Dendritic cell treated with granulocyte-macrophage colony-stimulating factor and Interleukin-4, amounts not matched to agents 40 ng/mL and 50 ng/mL, for 4 days (primary cell): ENCODE measurements at regions of chr9 and their contacts with region 1.

Region 1: DNA sequence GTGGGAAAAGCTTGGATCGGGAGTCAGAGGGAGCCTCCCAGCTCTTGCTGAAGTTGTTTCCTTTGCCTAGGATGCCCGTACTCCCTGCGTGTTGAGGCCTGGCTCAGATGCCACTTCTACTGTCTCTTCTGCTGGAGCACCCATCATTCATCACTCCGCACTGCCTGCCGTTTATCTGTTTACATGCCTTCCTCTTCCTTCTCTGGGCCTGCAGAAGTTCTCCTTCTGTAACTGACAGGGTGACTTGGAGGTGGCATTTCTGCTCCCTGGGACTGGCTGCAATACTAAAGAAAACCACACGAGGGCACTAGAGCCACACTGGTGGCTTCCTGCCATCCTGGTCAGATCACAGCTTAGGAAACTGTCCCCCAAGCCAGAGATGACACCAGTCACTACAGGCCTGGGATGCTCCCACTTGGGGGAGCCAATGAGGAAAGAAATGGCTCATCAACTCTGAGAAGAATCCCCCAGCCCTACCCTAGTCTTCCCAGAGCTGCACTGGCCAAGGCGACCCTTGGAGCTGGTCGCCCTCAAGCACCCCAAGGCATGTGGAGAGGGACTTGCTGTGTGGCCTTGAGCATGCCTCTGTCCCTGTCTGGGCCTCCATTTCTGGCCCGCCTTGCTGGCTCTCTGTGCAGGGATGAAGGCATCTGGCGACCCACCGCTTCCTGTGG is 9.7 kb upstream of the SLC25A51 start:
- H3K4me3 Mint-ChIP-seq: no peak overlapping the region
- H3K27ac Mint-ChIP-seq: no peak overlapping the region
- H3K4me1 Mint-ChIP-seq: peaks cover 46% of the 10 kb centered on the region
- H3K27me3 Mint-ChIP-seq: no peaks in the 10 kb centered on the region

Region 2: GRCh38 chr9:37746848-37747753 is 166.5 kb before region 1 on chr9:
- intact Hi-C with region 1: loop called (anchors 5 kb)
- H3K4me3 Mint-ChIP-seq: no peak overlapping the region
- H3K27ac Mint-ChIP-seq: no peak overlapping the region
- H3K4me1 Mint-ChIP-seq: no peaks in the 10 kb centered on the region
- H3K27me3 Mint-ChIP-seq: no peaks in the 10 kb centered on the region

Region 3: DNA sequence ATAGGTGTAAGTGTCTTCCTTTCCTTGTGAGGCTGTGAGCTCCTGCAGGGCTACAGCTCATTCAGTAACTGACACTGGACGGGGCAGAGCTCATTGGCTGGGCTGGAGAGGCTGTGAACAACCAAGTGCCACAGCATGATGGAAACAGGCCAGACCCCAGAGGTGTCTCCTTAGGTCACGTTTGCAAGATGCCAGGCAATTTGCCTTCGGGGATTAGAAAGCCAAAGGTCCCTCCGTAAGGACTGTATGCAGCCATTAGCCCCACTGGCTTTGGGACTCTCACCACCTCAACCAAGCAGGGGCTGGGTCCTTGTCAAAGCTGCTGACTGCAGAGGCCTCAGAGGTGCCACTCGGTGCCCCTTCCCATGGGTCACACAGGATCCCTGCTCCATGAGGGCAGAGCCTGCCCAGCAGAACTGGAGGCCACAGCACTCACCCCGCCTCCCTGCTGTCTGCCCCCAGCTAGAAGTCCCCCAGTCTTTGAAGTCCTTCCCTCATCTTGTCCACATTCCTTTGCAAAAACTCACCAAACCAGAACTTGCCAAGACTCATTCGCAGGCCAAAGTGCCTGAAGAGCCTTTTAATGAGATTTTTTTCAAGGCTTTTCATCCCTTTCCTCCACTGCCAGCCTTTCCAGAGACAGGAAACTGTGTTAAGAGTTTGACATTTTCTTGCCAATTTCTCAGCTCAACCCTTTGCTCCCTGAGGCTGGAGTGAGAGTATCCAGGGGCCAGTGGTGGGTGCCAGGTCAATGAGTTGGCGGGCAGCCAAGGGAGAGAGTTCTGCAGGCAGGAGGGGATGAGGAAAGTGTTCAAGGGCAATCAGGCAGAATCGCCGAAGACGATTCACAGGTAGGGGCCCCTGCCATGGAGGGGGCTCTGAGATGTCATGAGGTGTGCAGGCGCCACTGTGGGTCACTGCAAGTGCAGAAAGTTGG is 30.0 kb after region 1 on chr9:
- intact Hi-C with region 1: no loop called
- H3K4me3 Mint-ChIP-seq: no peak overlapping the region
- H3K27ac Mint-ChIP-seq: no peak overlapping the region
- H3K4me1 Mint-ChIP-seq: peaks cover 13% of the 10 kb centered on the region
- H3K27me3 Mint-ChIP-seq: no peaks in the 10 kb centered on the region

Region 4: DNA sequence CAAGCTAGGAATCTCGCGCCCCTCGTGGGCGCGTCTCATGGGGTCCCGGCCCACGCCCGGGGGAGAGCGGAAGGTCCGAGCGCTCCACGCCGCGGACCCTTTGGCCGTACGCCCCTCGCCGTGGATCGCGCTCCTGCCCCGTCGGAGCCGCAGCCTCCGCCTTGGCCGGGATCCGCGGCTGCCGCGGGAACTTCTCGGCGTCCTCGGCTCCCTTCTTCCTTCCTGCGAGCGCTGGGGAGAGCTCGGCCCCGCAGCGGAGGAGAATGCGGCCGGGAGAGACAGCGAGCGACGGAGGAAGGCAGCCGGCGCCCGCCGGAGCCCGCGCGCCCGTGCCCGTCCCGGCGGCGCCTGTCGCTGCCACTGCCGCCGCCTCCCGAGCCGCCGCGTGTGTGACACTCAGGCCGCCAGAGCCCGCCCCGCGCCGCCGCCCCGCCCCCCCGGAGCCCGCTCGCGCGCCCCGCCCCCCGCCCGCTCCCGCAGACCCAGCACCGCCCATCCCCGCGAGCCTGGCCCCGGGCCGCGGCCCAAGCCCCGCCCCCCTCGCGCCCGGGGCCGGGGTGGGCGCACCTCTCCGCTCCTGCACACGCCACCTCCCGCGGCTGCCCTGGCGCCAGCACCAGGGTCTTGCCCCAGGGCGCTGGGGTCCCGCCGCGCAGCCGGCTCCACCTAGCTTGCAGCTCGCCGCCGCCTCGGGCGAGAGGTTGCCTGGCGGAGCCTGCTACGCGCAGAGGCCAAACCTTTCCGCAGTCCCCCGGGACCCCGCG is 155.4 kb after region 1 on chr9 and contains the start of gene SHB:
- intact Hi-C with region 1: loop called (anchors 1 kb)
- H3K4me3 Mint-ChIP-seq: peak within 1 kb of the TSS; percentile 85
- H3K27ac Mint-ChIP-seq: peak within 1 kb of the TSS; percentile 81
- H3K4me1 Mint-ChIP-seq: peaks cover 68% of the 10 kb centered on the region
- H3K27me3 Mint-ChIP-seq: peaks cover 3% of the 10 kb centered on the region

Region 5: GRCh38 chr9:38088006-38088925 is 174.6 kb after region 1 on chr9:
- intact Hi-C with region 1: loop called (anchors 2 kb)
- H3K4me3 Mint-ChIP-seq: no peak overlapping the region
- H3K27ac Mint-ChIP-seq: no peak overlapping the region
- H3K4me1 Mint-ChIP-seq: peaks cover 62% of the 10 kb centered on the region
- H3K27me3 Mint-ChIP-seq: no peaks in the 10 kb centered on the region

Region 6: GRCh38 chr9:38160613-38161215 is 247.1 kb after region 1 on chr9:
- intact Hi-C with region 1: loop called (anchors 1 kb)
- H3K4me3 Mint-ChIP-seq: no peak overlapping the region
- H3K27ac Mint-ChIP-seq: no peak overlapping the region
- H3K4me1 Mint-ChIP-seq: no peaks in the 10 kb centered on the region
- H3K27me3 Mint-ChIP-seq: peaks cover 7% of the 10 kb centered on the region

Region 7: DNA sequence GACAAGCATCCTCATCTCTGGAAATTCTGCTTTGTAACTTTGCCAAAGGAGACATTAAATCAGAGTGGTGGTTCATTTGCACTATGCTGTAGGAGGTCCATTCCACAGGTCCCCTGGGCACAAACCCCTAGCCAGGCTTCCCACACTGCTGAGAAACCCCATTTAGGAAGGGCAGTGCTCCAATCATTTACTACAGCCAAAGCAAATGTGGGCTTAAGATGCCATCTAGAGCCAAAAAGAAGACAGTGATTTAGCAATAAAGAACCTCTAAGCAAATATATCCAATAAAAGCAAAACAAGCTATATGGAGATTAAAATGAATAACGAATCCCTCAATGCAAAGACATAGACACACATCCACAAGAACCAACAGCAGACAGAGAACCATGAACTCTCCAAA is 349.9 kb after region 1 on chr9:
- intact Hi-C with region 1: loop called (anchors 10 kb)
- H3K4me3 Mint-ChIP-seq: no peak overlapping the region
- H3K27ac Mint-ChIP-seq: no peak overlapping the region
- H3K4me1 Mint-ChIP-seq: no peaks in the 10 kb centered on the region
- H3K27me3 Mint-ChIP-seq: peaks cover 2% of the 10 kb centered on the region

Region 8: DNA sequence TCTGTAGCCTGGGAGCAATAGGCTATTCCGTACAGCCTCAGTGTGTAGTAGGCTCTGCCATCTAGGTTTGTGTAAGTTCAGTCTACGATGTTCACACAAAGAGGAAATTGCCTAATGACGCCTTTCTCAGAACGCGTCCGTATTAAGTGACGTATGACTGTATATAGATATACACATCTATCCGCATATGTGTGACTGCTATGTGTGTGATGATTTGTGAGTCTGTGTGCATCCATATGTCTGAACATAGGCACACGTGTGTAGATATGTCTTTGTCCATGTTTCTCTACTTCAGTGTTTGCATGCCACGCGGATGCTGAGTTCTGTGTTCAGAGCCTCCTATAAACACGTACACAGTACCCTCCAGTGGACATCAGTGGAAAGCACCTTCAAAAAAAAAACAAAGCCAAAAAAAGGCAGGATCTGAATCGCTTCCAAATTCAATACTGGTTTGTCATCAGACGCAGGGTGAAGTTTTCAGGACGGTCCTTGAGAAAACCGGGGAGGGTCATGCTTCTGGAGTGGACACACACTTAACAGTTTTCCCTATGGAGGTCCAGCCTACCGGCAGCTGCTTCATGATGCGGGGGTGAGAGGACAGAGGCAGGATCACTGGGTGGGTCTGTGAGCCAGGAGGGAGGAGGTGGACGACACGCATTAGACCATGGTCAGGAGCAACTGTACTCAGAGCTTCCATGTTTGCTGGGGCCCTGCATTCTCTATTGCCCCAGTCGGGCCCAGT is 449.4 kb after region 1 on chr9:
- intact Hi-C with region 1: loop called (anchors 2 kb)
- H3K4me3 Mint-ChIP-seq: peak overlapping the region; percentile 63
- H3K27ac Mint-ChIP-seq: no peak overlapping the region
- H3K4me1 Mint-ChIP-seq: peaks cover 8% of the 10 kb centered on the region
- H3K27me3 Mint-ChIP-seq: no peaks in the 10 kb centered on the region